ENCODE measurements at regions of chr3 and their contacts with region 1.

Region 1: GRCh38 chr3:48439820-48440589 is at the starts of genes CCDC51 and TMA7:
- DNase-seq: peak; percentile 94 to 97
- H3K4me3 ChIP-seq: peak within 1 kb of the TSS; percentile 80 to 99 (median 94)
- H3K27ac ChIP-seq: peak within 1 kb of the TSS; percentile 80
- H3K4me1 ChIP-seq: peaks cover 0 to 8% (median 3%) of the 10 kb centered on the region in 4 experiments; a peak in 5 of 7 replicates
- H3K27me3 ChIP-seq: no peaks in the 10 kb centered on the region
- CTCF ChIP-seq: no peak
- EP300 ChIP-seq: no peak
- POLR2A ChIP-seq: peak; percentile 77 to 88; a peak in 2 of 3 replicates
- RAD21 ChIP-seq: no peak
- total RNA-seq, gene CCDC51: 20.3 and 21.3 TPM in 2 replicates
- total RNA-seq, gene TMA7: 305 and 322 TPM in 2 replicates

Region 2: GRCh38 chr3:48240711-48241491 is 199.1 kb before region 1 on chr3 and contains the start of gene ZNF589:
- CTCF ChIA-PET with region 1: interaction called, 6 read pairs
- POLR2A ChIA-PET with region 1: interaction called, 12 read pairs
- DNase-seq: peak; percentile 82 to 90
- H3K4me3 ChIP-seq: peak within 1 kb of the TSS; percentile 92 to 98 (median 96)
- H3K27ac ChIP-seq: peak within 1 kb of the TSS; percentile 92
- H3K4me1 ChIP-seq: peaks cover 2 to 15% (median 8%) of the 10 kb centered on the region in 4 experiments; a peak in 5 of 7 replicates
- H3K27me3 ChIP-seq: no peaks in the 10 kb centered on the region
- CTCF ChIP-seq: peak in 2 of 3 experiments; percentile 15 to 22; a peak in 2 of 4 replicates
- EP300 ChIP-seq: 0 out of 3 replicates have a peak, but pooled peaks of 1 of the 2 experiments have one; percentile 7
- POLR2A ChIP-seq: peak; percentile 89 to 97
- RAD21 ChIP-seq: no peak
- total RNA-seq, gene ZNF589: 106 and 113 TPM in 2 replicates

Region 3: DNA sequence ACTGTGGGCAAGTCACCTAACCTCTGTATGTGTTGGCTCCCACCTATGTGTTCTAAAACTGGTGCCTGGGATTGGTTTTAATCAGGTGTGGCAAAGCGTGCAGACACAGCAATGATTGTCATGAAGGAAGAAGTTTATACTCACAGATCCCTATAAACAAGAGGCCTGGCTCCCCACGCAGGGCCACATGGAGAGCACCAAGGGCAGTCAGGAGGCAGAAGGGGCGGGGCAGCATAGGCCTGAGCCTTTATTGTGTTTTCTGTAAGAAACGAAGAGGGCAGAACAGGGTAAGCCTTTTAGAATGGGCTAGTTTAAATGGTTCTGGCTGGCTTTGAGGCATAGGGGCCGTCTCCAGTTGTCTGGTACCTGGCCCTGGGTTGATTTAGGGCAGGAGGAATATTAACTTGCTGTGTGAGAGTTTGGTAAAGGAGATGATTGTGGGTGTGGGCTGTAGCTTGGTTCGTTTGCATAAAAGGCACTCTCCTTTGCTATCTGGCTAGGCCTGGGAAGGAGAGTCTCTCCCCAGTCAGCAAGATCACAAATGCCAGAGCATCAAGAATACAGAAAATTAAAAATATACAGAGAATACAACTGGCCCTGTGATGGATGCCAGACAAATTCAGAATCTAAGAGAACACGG is 70.2 kb before region 1 on chr3:
- CTCF ChIA-PET with region 1: interaction called, 11 read pairs
- POLR2A ChIA-PET with region 1: interaction called, 3 read pairs
- DNase-seq: no peak
- H3K4me3 ChIP-seq: no peak overlapping the region
- H3K27ac ChIP-seq: no peak overlapping the region
- H3K4me1 ChIP-seq: peaks cover 3 to 12% (median 7%) of the 10 kb centered on the region in 4 experiments; a peak in 6 of 7 replicates
- H3K27me3 ChIP-seq: no peaks in the 10 kb centered on the region
- CTCF ChIP-seq: no peak
- EP300 ChIP-seq: no peak
- POLR2A ChIP-seq: peak in 1 of 2 experiments; percentile 23; a peak in 1 of 3 replicates
- RAD21 ChIP-seq: no peak

Region 4: DNA sequence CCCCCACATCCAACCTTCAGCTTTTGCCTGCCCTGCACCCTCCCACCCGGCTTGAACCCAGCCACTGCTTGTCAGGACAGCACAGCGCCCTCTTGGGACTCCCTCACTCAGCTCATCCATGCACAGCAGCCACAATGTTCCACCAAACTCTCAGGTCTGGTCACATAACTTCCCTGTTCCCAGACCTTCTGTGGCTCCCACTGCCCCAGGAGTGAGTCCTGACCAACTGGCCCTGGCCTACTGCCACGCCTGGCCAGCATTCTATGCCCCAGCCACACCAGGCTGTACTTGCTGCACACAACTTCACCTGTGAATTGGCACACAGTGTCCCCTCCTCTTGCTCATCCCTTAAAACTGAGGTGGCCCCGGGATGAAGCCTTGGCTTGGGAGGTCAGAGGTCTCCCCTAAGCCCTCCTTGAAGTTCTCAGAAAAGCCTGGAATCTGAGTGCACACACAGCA is 31.2 kb before region 1 on chr3:
- CTCF ChIA-PET with region 1: interaction called, 220 read pairs
- POLR2A ChIA-PET with region 1: interaction called, 650 read pairs
- DNase-seq: no peak
- H3K4me3 ChIP-seq: no peak overlapping the region
- H3K27ac ChIP-seq: no peak overlapping the region
- H3K4me1 ChIP-seq: no peaks in the 10 kb centered on the region
- H3K27me3 ChIP-seq: no peaks in the 10 kb centered on the region
- CTCF ChIP-seq: peak in 2 of 3 experiments; percentile 30 to 50; a peak in 2 of 4 replicates
- EP300 ChIP-seq: no peak
- POLR2A ChIP-seq: no peak
- RAD21 ChIP-seq: peak in 1 of 2 experiments; percentile 28; a peak in 1 of 4 replicates

Region 5: DNA sequence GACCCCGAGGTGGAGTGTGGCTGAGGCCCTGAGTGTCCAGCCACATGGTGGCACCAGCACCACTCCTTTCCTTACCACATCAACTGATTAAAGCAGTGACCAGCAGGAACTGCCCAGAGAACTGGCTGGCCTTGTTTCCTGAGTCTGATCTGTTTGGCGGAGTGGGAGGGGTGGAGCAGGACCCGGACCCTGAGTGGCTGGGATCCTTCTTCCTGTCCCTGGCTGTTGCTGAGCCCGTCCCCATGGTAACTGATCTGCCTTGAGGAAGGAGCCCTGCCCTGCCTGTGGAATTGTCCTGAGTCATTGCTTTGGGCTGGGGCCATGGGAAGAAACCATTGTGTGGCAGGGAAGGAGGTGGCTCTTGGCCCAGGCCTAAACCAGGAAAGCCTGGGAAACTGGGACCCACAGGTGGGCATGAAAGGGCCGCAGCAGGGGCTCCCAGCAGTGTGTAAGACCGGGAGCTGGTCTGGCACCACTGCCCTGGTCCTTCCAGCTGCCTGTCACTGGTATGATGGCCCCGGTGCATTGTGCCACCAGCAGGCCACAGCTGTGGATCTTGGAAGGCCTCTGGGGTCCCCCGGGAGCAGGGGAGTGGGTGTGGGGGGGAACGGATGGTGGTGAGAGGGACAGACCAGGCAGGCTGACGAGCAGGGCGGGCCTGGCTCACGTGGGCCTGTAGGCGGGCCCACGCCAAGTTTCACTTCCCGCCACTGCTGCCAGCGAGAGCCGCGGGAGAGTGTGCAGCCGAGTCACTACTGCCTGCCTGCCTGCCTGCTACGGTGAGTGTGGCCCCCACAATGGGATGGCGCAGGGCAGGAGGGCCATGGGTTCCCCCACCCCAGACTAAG is 25.8 kb after region 1 on chr3:
- CTCF ChIA-PET with region 1: interaction called, 23 read pairs
- POLR2A ChIA-PET with region 1: interaction called, 29 read pairs
- DNase-seq: peak; percentile 87 to 94
- H3K4me3 ChIP-seq: no peak overlapping the region; a peak in 1 of 8 replicates
- H3K27ac ChIP-seq: peak overlapping the region; percentile 88
- H3K4me1 ChIP-seq: peaks cover 0 to 25% (median 14%) of the 10 kb centered on the region in 4 experiments; a peak in 5 of 7 replicates
- H3K27me3 ChIP-seq: no peaks in the 10 kb centered on the region
- CTCF ChIP-seq: peak in 2 of 3 experiments; percentile 87 to 92; a peak in 3 of 4 replicates
- EP300 ChIP-seq: peak in 1 of 2 experiments; percentile 72; a peak in 1 of 3 replicates
- POLR2A ChIP-seq: no peak
- RAD21 ChIP-seq: peak; percentile 93

Region 6: GRCh38 chr3:48548729-48549705 is 109.0 kb after region 1 on chr3:
- CTCF ChIA-PET with region 1: interaction called, 11 read pairs
- POLR2A ChIA-PET with region 1: interaction called, 12 read pairs
- DNase-seq: peak; percentile 54 to 95
- H3K4me3 ChIP-seq: no peak overlapping the region
- H3K27ac ChIP-seq: peak overlapping the region; percentile 25; the same call in 1 of the 2 replicates
- H3K4me1 ChIP-seq: peaks cover 0 to 1% (median under 1%) of the 10 kb centered on the region in 4 experiments; a peak in 3 of 7 replicates
- H3K27me3 ChIP-seq: no peaks in the 10 kb centered on the region
- CTCF ChIP-seq: peak in 2 of 3 experiments; percentile 95 to 99; a peak in 3 of 4 replicates
- EP300 ChIP-seq: no peak
- POLR2A ChIP-seq: no peak
- RAD21 ChIP-seq: peak; percentile 90 to 94

Region 7: DNA sequence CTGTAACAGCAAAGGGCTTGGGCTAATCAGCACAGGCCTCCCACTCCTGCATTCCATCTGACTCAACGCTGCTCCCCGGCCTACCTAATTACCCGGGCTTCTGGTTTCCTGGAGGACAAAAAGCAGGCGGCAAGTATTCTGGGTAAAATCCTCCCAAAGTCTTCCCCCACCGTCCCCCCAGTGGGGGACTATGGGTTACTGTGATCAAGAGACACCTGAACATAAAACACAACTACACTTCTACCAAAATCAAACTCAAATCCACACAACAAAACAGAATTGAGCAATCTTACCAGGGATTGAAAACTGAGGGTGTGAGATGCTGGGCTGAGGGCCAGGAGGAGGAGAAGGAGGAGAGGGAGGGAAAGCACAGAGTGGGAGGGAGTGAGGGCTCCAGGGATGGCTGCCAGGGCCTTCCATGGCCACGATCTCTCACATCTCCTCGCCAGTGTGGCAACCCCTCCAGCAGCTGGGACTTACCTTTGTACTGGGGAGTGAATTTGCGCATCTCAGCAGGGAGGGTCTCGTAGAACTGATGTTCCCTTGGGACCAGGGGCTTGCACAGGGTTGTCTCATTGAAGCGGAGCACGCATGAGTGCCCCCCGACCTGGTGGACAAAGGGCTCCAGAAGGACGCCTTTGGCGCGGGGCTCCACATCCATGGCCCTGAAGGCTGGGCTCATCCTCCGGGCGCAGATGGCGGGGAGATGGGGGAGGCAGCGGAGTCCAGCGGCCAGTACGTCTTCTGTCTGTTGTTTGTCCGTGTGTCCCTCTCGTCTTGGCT is 254.8 kb after region 1 on chr3:
- CTCF ChIA-PET with region 1: no interaction called
- POLR2A ChIA-PET with region 1: no interaction called
- DNase-seq: no peak
- H3K4me3 ChIP-seq: peak overlapping the region in 3 of 4 experiments; percentile 12 to 36 (median 20); a peak in 5 of 8 replicates
- H3K27ac ChIP-seq: peak overlapping the region; percentile 69
- H3K4me1 ChIP-seq: peaks cover 6 to 7% (median 6%) of the 10 kb centered on the region in 4 experiments
- H3K27me3 ChIP-seq: no peaks in the 10 kb centered on the region
- CTCF ChIP-seq: no peak
- EP300 ChIP-seq: no peak
- POLR2A ChIP-seq: no peak
- RAD21 ChIP-seq: no peak